Activated CD8-positive, alpha-beta T cell treated with anti-CD3 and anti-CD28 coated beads for 36 hours (primary cell): ENCODE measurements at regions of chr6 and their contacts with region 1.

Region 1: DNA sequence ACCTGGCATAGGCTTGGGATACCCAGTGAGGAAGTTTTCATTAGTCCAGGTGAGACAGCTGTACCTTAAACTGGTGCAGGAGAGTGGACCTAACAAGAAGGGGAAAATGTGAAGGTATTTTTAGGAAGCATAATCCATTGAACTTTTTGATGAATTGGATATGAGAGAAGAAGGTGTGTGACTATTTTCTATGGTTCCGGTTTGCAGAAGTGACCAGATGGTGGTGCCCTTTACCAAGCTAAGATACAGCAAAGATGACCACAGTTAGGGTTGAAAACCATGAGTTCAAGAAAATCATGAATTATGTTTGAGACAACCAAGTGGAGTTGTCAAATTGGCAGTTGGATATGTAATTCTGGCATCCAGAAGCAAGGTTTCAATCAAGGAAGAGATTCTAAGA is 61.9 kb upstream of the NRSN1 start:
- DNase-seq: no peak
- ATAC-seq: no peak
- H3K4me3 Mint-ChIP-seq: no peak overlapping the region
- H3K27ac Mint-ChIP-seq: no peak overlapping the region
- H3K4me1 Mint-ChIP-seq: no peaks in the 10 kb centered on the region
- H3K27me3 Mint-ChIP-seq: no peaks in the 10 kb centered on the region
- CTCF ChIP-seq: peak; percentile 17

Region 2: DNA sequence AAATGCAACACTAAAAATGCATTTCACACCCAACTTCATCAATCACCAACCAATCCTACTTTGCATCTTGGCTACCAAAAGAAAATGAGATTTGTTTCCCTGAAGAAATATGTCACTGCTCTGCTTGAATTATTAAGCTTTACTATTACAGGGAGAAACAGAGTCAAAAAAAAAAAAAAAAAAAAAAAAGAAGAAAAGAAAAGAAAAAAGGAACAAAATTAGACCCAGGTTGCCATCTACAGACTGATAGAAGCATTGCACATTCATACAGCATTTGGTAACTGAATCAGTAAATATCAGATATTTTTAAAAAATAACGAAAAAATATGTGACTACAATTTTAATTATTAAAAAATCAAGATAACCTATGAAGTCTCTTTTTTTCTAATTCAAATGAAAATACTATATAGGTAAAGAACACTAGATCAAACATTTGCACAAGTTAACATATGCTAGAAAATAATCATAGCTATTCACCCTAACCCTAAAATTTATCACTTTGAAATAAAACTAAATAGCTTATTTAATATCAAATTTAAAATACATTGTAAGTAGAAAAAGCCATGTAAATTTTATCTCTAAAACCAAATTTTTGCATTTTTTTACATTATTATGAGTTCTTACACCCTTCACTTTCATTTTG is 210.5 kb after region 1 on chr6:
- CTCF ChIA-PET with region 1: no interaction called
- POLR2A ChIA-PET with region 1: no interaction called
- intact Hi-C with region 1: loop called (anchors 10 kb)
- DNase-seq: no peak
- ATAC-seq: no peak
- H3K4me3 Mint-ChIP-seq: no peak overlapping the region
- H3K27ac Mint-ChIP-seq: no peak overlapping the region
- H3K4me1 Mint-ChIP-seq: no peaks in the 10 kb centered on the region
- H3K27me3 Mint-ChIP-seq: peaks cover 8% of the 10 kb centered on the region
- CTCF ChIP-seq: peak; percentile 72